HEK293 (cell line): ENCODE measurements at regions of chr18 and their contacts with region 1.

Region 1: GRCh38 chr18:11995445-11996189 is 14.3 kb downstream of the IMPA2 start:
- H3K4me3 ChIP-seq: no peak overlapping the region
- H3K27ac ChIP-seq: no peak overlapping the region
- H3K4me1 ChIP-seq: no peaks in the 10 kb centered on the region
- CTCF ChIP-seq: peak; percentile 77

Region 2: DNA sequence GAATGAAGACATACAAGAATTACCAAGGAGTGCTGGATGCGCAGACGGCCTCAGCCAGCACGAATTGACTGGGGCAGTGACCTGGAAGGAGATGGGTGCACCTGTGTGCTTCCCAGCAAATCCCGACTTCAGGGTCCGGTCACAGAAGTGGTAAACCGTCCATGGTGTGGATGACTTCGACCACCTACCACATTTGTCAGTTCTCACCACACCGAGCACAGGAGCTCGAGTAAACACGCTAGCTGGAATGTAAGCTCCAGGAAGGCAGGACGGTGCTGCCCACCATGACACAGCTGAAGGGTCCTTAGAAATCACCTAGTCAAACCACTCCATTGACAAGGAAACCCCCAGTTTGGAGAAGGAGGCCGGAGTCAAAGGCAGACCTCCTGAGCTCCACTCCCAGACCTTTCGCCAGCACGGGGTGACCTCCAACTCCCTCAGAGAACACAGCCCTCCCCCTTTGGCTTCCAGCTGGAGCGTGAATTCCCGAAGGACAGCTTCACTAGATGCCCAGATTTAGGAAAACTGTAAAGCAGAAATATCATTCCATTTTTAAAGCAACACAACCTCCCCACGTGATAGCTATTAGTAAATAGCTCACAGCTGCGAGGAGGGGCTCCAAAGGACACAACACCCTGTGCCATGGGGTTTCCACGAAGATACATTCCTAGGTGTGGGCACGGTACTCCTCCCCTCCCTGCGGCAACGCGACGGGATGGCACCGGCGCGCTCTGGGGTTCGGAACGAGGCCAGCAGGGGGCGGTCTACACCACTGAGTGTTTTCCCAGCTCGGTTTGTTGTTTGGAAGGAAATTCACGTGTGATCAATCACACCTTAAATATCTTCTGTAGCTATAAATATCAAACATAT is 340.6 kb before region 1 on chr18:
- CTCF ChIA-PET with region 1: interaction called, 60 read pairs
- POLR2A ChIA-PET with region 1: no interaction called
- H3K4me3 ChIP-seq: no peak overlapping the region
- H3K27ac ChIP-seq: no peak overlapping the region
- H3K4me1 ChIP-seq: no peaks in the 10 kb centered on the region
- CTCF ChIP-seq: peak; percentile 80

Region 3: DNA sequence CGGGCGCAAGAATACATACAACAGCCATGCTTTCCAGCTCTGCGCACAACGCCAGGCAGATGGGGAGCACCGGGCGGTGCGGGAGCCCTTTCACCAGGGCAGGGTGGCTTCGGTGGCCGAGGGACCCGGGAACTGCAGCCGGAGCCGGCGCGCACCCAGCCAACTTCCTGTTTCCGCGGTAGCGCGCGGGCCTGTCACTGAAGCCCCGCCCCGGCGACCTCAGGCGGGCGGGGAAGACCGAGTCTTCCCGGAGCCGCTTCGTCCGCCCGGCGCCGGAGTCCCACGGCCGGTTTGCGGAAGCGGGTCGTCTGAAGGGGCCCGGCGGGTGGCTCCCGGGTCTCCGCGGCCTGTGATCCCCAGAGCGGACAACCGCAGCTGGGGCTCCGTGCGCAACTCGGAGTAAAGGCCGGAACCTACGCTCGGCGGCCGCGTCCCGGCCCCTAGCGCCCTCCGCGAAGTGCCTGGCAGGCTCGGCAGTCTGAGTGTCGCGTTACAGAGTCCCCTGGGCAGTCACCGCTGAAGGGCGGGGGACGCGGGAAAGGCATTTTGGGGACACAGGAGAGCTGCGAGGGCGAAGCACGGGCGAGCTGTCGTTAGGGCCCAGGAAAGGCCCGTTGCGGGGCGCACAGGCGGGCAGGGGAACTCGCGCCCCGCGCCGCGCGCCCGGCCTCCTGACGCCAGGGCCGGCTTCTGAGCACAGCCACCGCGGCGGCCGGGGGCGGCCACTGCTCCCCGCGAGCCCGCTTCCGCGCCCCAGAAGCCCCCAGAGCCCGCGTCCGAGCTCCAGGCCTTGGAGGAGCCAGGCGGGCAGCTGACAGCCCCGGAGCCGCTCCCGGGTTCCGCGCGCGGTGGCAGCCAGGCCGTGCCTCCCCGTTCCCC is 87.2 kb before region 1 on chr18 and contains the start of gene MPPE1:
- CTCF ChIA-PET with region 1: interaction called, 14 read pairs
- POLR2A ChIA-PET with region 1: no interaction called
- H3K4me3 ChIP-seq: peak within 1 kb of the TSS; percentile 73
- H3K27ac ChIP-seq: peak within 1 kb of the TSS; percentile 96
- H3K4me1 ChIP-seq: 0 out of 2 replicates have a peak, but pooled peaks cover 4% of the 10 kb centered on the region
- CTCF ChIP-seq: peak; percentile 61

Region 4: GRCh38 chr18:11937874-11938478 is 57.6 kb before region 1 on chr18:
- CTCF ChIA-PET with region 1: interaction called, 436 read pairs
- POLR2A ChIA-PET with region 1: interaction called, 10 read pairs
- H3K4me3 ChIP-seq: no peak overlapping the region
- H3K27ac ChIP-seq: no peak overlapping the region
- H3K4me1 ChIP-seq: no peaks in the 10 kb centered on the region
- CTCF ChIP-seq: no peak

Region 5: DNA sequence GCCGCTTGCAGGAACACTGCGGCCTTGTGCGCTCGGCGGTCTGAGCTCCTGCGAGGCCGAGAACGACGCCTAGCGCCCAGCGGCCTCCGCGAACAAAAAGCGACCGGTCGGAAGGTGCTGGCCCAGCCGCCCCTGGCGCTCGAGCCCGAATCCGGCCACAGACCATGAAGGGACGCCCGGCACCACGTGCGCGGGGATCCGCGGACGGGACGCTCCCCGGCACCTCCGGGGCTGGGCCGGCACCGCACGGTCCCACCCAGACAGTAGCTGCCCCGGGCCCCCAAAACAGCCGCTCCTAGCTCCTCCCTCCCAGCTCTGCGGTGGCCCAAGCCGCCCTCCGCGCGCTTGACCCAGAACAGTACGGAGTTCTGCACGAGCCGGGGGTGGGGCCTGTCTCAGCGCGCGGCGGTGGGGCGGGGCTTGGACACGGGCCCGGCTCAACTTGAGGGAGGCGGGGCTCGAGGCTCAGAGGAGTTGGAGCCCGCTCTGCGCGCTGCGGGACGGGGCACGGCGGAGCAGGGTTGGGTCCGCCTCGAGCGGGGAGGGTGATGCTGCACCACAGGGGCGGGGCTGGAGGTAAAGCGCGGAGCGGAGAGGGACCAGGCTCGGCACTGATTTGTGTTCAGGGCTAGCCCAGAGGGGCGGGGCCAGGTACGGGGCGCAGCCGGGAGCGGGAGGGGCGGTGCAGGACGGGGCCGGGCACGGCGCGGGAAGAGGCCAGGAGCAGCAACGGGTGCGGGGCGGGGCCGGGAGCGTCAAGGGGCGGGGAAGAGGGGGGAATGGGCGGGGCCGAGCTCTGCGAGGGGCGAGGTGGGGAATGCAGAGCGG is 14.8 kb before region 1 on chr18:
- CTCF ChIA-PET with region 1: interaction called, 26 read pairs
- POLR2A ChIA-PET with region 1: interaction called, 17 read pairs
- H3K4me3 ChIP-seq: peak overlapping the region; percentile 52
- H3K27ac ChIP-seq: peak overlapping the region; percentile 94
- H3K4me1 ChIP-seq: peaks cover 3% of the 10 kb centered on the region; the same call in 1 of the 2 replicates
- CTCF ChIP-seq: peak; percentile 93

Region 6: DNA sequence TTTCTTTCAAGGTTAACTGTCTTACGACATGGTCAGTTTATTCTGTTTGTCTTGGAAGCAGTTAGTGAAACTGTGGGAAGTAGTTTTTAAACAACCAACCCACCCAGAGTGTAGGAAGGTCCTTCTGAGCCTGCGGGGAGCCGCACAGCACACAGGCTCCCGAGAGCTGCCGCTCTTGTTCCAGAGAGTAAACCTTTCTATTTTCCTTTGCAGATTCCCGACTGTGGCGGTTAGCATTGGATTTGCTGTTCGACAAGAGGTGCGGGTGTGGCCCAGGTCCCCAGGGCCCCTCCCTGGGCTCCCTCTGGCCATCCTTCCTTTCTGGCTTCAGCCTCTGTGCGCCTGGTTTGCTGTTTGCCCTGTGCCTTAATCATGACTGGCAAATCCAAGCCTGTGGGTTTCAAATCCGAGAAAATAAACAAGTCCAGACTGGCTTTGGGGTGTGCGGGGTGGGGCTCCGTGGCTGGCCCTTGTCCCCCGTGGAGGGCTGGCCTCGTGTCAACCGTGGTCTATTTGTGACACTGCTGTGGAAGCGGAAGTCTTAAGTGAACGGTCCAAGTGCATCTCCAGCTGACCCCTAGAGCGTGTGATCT is 16.4 kb after region 1 on chr18:
- CTCF ChIA-PET with region 1: interaction called, 15 read pairs
- POLR2A ChIA-PET with region 1: interaction called, 3 read pairs
- H3K4me3 ChIP-seq: no peak overlapping the region
- H3K27ac ChIP-seq: no peak overlapping the region
- H3K4me1 ChIP-seq: no peaks in the 10 kb centered on the region
- CTCF ChIP-seq: no peak

Region 7: DNA sequence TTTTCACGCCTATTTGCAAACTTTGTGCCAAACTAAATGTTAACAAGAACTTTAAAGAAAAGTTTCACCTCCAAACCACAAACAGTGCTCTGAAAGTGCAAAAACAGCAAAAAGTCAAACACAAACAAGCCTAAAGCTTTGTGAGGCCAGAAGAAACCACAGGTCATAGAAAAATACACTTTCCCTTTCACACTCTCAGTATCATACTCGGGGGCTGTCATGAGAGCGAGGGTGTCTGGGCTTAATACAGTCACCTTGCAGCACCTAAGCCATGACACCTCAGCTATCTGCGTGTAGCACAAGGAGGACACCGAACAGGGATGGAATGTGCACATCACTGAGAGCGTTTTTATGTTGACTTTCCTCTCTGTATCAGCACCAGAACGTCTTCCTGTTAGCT is 925.6 kb after region 1 on chr18:
- CTCF ChIA-PET with region 1: no interaction called
- POLR2A ChIA-PET with region 1: no interaction called
- H3K4me3 ChIP-seq: no peak overlapping the region
- H3K27ac ChIP-seq: no peak overlapping the region
- H3K4me1 ChIP-seq: no peaks in the 10 kb centered on the region
- CTCF ChIP-seq: no peak